ENCODE measurements at regions of chr12 and their contacts with region 1.

Region 1: GRCh38 chr12:101830367-101831325 is at the start of gene GNPTAB:
- DNase-seq: peak; percentile 97
- total RNA-seq, gene GNPTAB: 47.9 TPM

Region 2: DNA sequence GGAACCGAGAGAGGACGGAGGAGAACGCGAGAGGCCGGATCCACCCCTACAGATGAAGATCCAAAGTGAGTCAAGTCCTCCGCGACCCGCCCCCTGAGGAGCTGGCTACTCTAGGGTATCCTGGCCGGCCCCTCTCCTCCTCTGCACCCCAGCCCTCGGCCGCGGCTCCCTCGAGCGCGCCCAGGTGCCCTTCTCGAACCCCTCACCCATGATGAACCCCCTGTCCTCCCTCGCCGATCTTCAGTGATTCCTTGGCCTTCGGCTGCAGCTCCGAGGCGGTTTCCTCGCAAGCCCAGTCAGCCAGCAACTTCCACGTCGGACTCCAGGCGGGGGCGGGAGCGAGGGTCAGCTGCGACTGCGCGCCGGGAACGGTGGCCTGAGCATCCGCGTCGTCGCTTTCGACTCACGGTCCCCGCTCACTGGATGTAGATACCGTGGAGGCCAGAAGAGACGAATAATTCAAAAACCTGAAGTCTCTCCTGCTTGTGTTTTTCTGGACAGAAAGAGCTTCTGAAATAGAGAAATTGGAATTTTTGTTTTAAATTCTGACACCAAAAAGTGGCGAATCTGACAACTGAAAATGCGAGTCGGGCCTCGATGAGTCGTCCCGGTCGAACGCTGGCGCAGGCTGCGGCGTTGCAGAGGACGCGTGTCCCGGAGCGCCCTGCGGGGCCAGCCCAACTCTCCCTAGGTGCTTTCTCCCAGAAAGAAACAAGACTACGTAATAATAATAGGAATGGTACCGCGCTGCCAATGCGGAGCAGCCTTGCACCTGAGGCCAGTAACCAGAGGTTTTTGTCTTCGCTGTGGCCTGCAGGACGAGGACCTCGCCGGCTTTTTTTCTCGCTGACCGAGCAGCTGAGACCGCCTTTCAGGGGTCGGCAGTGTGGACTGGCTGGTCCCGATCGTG is 423.0 kb before region 1 on chr12 and contains the start of gene ARL1:
- intact Hi-C with region 1: loop called (anchors 5 kb)
- DNase-seq: peak; percentile 94
- total RNA-seq, gene ARL1: 92.6 TPM

Region 3: DNA sequence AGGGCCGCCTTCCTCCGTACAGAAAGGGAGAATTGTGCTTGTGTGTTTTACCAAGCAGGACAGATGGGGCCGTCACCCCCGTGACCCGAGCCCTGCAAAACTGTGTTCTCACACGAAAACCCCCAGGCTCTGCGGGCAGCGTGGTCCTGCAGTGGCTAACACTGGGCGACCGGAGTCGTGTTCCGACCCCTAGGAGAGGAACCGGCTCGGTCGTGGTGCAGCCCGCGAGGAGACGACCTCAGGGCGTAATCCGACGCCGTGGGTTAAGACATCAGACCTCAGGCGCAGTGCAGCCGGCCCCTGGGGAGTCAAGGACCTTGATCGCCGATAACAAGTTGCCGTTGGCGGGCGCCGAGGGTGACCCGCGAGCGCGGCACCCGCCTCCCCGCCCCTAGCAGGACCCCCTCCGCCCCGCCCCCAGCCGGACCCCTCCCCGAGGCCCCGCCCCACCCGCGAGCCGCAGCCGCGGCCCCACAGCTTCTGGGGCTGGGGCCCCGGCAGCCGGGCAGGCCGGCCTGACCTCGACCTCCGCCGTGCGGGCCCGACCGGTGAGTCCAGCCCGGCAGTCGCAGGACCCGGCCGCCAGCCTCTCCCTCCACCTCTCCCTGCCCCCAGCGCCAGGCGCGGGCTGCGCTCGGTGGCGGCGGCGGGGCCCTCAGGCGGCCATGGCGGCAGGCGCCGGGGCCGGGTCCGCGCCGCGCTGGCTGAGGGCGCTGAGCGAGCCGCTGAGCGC is 133.3 kb before region 1 on chr12 and contains the start of gene CHPT1:
- intact Hi-C with region 1: loop called (anchors 5 kb)
- DNase-seq: peak; percentile 88
- total RNA-seq, gene CHPT1: 86.1 TPM

Region 4: DNA sequence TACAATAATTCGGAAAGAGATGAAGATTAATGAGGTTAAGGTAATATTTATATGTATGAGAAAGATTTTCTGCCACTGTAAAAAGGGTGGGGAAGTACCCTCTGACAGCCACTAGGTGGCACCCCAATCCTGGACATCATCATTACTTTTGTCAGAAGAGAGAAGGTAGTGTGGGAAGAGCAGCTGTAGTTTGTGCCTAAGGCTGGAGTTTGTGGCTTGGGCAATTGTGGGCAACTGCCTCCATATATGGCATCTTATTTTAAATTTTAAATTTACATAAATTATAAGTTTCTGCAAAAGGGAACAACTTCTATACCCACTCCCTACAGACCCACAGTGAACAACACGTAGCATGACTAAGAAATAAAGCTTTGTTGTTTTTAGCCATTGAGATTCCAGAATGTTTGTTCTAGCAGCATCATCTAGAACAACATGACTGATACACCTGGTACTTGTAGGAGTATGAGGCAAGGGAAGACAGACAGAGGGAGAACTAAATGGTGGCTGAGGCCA is 56.9 kb before region 1 on chr12:
- intact Hi-C with region 1: loop called (anchors 2 kb)
- DNase-seq: no peak

Region 5: DNA sequence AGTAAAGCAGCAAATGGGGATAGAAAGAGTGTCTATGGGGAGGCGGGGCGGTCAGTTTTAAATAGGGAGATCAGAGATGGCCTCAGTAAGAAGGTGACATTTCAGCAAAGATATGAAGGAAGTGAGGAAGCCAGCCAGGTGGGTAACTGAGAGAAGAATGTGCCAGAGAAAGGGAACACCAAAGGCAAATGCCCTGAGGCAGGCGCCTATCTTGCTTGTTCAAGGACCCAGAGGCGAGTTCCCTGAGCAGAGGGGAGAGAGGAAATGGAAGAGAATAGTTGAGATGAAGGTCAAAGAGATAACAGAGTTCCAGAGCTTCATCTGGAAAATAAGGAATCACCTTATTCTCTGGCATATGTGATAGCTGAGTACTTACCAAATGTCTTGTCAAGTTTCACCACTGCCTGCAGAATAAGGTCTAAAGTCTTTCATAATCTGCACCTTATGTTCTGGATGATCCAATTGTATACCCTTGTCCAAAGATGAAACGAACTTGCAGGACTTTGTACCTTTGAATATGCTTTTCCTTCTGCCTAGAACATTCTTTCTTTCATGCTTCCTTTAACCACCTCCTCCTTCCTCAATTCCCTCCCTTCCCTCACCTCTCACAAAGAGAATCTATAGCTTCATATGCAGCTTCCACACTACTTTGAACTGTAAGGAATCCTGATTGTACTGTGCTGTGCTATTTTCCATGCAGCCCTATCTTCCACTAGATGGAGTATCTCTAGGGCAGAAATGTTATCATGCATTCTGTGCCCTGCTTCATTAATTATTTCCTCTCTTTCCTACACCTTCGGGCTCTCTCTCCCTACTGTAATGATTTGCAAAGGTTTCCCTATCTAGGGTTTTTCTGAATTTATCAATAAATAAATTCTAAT is 38.4 kb before region 1 on chr12:
- intact Hi-C with region 1: loop called (anchors 5 kb)
- DNase-seq: no peak

Region 6: DNA sequence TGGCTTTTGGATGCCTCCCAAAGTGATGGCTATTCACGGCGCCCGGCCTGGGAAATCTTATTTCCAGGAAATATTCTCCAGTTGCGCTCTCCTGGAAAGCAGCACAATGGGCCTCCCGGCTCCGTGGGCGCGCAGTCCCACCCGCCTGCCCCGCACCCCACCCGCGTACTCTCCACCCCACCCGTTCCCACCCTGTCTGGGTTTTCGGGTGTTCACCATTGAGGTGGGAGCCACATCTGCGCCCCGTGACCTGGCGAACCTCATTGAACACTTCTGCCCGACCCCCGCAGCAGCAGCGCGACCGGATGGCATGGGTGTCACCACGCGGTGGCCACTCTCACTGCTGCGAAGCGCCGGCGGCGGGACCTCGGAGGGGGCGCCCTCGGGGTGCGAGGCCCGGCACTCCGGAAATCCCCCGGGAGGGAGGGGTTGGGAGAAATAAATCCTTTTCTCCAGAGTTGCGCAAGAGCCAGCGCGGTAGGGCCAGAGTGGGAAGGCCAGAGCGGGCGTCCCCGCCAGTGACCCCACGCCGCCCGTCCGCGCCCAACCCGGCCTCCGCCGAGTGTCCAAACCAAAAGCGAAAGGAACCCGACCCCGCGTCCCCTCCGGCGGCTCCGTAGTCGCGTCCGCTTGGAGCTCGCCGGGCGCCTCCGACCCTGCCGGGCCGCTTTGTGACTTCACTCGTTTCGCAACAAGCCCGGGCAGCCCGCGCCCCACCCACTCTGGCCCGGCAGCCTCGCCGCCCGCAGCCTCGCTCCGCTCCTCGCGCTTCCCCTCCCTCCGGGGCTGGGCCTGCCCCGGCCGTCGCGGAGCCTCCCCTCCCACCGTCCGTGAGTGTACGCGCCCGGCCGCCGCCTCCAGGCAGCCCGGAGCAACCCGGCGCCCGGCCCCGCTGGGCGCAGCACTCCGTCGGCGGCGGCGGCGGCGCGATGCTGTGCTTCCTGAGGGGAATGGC is 46.5 kb after region 1 on chr12 and contains the start of gene DRAM1:
- intact Hi-C with region 1: loop called (anchors 2 kb)
- DNase-seq: peak; percentile 97
- total RNA-seq, gene DRAM1: 5.4 TPM